ENCODE measurements at regions of chr5 and their contacts with region 1.

Region 1: DNA sequence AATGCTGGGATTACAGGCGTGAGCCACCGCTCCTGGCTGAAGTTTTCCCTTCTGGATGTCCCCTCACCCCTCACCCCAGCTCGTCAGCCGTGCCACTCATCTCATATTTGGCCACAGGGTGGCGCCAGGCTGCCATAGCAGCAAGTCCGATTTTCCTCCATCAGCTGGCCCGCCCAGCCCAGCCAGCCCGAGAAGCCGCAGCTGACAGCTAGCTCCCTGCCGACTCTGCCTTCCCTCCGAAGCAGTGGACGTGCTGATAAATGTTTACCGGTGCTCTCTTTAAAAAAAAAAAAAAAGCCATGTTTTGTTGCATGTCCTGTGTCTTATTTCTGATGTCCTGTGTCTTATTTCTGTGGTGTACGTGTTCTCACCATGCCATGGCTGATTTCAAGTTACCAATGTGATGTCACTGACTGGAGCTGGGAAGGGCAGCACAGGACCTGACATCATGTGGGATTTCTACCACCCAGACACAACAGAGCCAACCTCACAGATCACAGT is 58.3 kb downstream of the PFDN1 start:
- DNase-seq: peak; percentile 98
- ATAC-seq: peak; percentile 49
- H3K4me3 Mint-ChIP-seq: no peak overlapping the region
- H3K27ac Mint-ChIP-seq: 0 out of 2 replicates have a peak overlapping the region, but pooled peaks have one; percentile 5
- H3K4me1 Mint-ChIP-seq: peaks cover 43% of the 10 kb centered on the region
- H3K27me3 Mint-ChIP-seq: no peaks in the 10 kb centered on the region
- CTCF ChIP-seq: peak; percentile 81

Region 2: DNA sequence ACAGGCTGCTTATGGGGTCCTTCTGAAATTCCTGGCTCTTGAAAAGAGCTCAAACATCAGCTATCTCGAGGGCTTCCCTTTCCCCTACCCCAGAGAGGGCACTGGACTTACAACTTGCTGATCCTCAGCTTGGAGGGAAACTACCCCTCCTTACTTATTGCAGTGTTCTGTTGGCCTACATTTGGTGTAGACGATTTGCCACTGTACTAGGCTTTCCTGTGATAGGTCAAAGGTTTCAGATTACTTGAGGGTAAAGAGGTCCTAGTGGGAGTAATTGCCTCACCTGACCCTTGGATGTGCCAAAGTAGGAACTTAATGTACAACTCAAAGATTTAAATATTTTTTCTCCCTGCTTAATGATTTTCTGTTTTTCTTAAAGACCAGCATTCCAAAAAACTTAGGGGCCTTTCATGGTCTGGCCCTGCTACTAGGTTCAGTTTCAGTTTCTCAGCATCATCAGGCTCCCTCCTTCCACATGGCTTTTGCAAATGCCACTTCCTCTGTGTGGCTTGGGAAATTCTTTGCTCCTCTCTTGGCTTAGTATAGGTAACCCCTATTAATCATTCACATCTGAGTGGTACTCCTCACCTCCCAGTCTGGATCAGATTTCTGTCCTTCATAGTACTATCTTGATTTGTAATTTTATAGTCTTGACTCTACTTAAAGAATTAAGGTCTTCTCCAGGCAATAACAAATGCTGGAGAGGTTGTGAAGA is 37.2 kb before region 1 on chr5:
- CTCF ChIA-PET with region 1: interaction called, 50 read pairs
- POLR2A ChIA-PET with region 1: no interaction called
- DNase-seq: no peak
- ATAC-seq: no peak
- H3K4me3 Mint-ChIP-seq: no peak overlapping the region
- H3K27ac Mint-ChIP-seq: no peak overlapping the region; the same call in 1 of the 2 replicates
- H3K4me1 Mint-ChIP-seq: peaks cover 12% of the 10 kb centered on the region
- H3K27me3 Mint-ChIP-seq: no peaks in the 10 kb centered on the region
- CTCF ChIP-seq: no peak

Region 3: GRCh38 chr5:140302786-140303639 is 58.4 kb after region 1 on chr5 and contains the start of gene PFDN1:
- CTCF ChIA-PET with region 1: interaction called, 38 read pairs
- POLR2A ChIA-PET with region 1: interaction called, 4 read pairs
- DNase-seq: peak; percentile 94
- ATAC-seq: peak; percentile 97
- H3K4me3 Mint-ChIP-seq: peak within 1 kb of the TSS; percentile 96
- H3K27ac Mint-ChIP-seq: peak within 1 kb of the TSS; percentile 99
- H3K4me1 Mint-ChIP-seq: peaks cover 8% of the 10 kb centered on the region
- H3K27me3 Mint-ChIP-seq: peaks cover 6% of the 10 kb centered on the region; the same call in 1 of the 2 replicates
- CTCF ChIP-seq: no peak
- total RNA-seq, gene PFDN1: 44.1 to 46.4 TPM (median 46.2 TPM) in 3 replicates

Region 4: DNA sequence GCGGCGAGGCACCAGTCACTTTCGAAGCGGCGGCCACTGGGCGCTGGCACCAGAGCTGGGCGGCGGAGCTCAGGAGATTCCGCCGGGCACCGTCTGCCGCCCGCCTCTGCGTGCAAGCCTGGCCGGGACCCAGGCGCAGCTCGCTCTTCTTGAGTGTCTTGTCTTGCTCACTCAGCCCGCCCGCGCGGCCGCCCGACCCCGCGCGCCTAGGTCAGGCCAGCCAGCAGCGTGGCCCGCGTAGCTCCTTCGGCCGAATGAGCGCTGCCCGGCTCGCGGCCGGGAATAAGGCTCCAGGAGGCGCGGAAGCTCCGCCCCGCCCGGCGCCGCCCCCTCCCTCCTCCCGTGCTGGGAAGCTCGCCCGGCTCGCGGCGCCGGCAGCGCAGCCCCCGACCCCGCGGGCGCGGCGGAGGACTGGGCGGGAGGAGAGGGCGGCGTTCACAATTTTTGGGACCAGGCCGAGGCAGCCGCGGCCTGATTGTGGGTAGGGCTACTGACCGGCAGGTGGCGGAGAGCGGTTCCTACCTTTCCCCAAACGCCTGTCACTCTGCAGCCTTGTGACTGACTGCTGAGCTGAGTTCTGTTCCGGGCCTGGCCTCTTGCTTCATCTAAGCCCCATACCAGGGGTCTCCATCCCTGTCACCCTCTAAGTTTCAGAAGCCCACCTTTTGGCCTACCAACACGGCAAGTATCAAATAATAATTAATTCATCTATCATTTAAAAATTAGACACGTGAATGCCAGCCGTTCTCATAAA is 102.0 kb after region 1 on chr5 and contains the start of gene HBEGF:
- CTCF ChIA-PET with region 1: interaction called, 621 read pairs
- POLR2A ChIA-PET with region 1: interaction called, 28 read pairs
- DNase-seq: peak; percentile 93
- ATAC-seq: peak; percentile 86
- H3K4me3 Mint-ChIP-seq: peak within 1 kb of the TSS; percentile 68
- H3K27ac Mint-ChIP-seq: no peak within 1 kb of the TSS
- H3K4me1 Mint-ChIP-seq: peaks cover 27% of the 10 kb centered on the region
- H3K27me3 Mint-ChIP-seq: peaks cover 11% of the 10 kb centered on the region
- CTCF ChIP-seq: peak; percentile 11; the same call in 1 of the 2 replicates
- total RNA-seq, gene HBEGF: 2.2 to 4.0 TPM (median 2.5 TPM) in 3 replicates

Region 5: DNA sequence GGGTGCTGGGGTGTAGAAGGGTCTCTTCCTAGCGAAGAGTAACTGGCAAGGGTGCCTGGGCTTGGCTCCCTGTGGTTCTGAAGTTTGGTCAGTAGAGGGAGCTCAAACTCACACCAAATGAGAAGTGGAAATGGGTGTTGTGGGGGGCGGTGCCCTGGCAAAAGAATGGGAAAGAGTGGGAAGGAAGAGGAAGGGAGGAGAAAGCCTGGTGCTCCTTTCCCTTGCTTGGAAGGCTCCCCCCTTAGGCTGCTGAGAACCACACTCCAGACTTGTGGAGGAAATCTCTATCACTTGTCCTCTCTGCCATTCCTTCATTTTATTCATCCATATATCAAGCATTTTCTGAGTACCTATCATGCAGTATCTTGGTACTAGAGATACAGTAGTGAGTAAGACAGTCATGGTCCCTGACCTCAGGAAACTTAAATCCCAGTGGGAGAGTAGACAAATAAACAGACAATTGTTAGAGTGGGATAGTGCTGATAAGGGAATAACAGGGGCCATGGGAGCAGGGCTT is 128.5 kb after region 1 on chr5:
- CTCF ChIA-PET with region 1: interaction called, 26 read pairs
- POLR2A ChIA-PET with region 1: no interaction called
- DNase-seq: peak; percentile 88
- ATAC-seq: peak; percentile 97
- H3K4me3 Mint-ChIP-seq: no peak overlapping the region
- H3K27ac Mint-ChIP-seq: peak overlapping the region; percentile 62
- H3K4me1 Mint-ChIP-seq: peaks cover 4% of the 10 kb centered on the region
- H3K27me3 Mint-ChIP-seq: no peaks in the 10 kb centered on the region; the same call in 1 of the 2 replicates
- CTCF ChIP-seq: peak; percentile 66

Region 6: GRCh38 chr5:140524003-140524402 is 279.4 kb after region 1 on chr5:
- CTCF ChIA-PET with region 1: no interaction called
- POLR2A ChIA-PET with region 1: no interaction called
- DNase-seq: no peak
- ATAC-seq: no peak
- H3K4me3 Mint-ChIP-seq: no peak overlapping the region
- H3K27ac Mint-ChIP-seq: no peak overlapping the region
- H3K4me1 Mint-ChIP-seq: no peaks in the 10 kb centered on the region
- H3K27me3 Mint-ChIP-seq: no peaks in the 10 kb centered on the region
- CTCF ChIP-seq: no peak

Measured in WTC11 (cell line).